ENCODE measurements at regions of chr20 and their contacts with region 1.

Region 1: DNA sequence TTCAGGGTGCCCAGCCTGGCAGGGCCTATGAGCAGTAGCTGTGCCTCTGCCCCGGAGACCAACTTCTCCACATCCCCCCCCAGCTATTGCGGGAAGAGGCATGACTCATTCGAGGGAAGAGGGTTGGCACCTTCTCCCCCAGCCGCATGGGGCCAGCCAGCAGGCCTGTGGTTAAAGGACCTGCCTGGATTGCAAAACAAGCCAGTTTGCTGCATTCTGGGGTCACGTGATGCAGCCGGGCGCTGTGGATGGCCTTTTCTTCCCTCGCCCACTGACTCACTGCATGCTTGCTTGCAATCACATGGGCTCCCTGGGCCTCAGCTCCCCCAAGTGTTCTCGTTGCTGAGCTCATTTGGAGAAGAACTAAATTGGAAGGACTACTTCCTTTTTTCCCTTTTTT is 182.5 kb downstream of the MAFB start:
- DNase-seq: peak; percentile 99
- H3K4me3 Mint-ChIP-seq: no peak overlapping the region
- H3K27ac Mint-ChIP-seq: peak overlapping the region; percentile 74
- H3K4me1 Mint-ChIP-seq: peaks cover 41% of the 10 kb centered on the region
- H3K27me3 Mint-ChIP-seq: no peaks in the 10 kb centered on the region
- CTCF ChIP-seq: no peak

Region 2: GRCh38 chr20:40279390-40279789 is 227.2 kb before region 1 on chr20:
- CTCF ChIA-PET with region 1: interaction called, 3 read pairs
- POLR2A ChIA-PET with region 1: interaction called, 11 read pairs
- intact Hi-C with region 1: no loop called
- DNase-seq: peak; percentile 84
- H3K4me3 Mint-ChIP-seq: no peak overlapping the region
- H3K27ac Mint-ChIP-seq: peak overlapping the region; percentile 84
- H3K4me1 Mint-ChIP-seq: peaks cover 28% of the 10 kb centered on the region
- H3K27me3 Mint-ChIP-seq: no peaks in the 10 kb centered on the region
- CTCF ChIP-seq: no peak

Region 3: GRCh38 chr20:40286975-40287531 is 219.5 kb before region 1 on chr20:
- CTCF ChIA-PET with region 1: interaction called, 11 read pairs
- POLR2A ChIA-PET with region 1: interaction called, 17 read pairs
- intact Hi-C with region 1: no loop called
- DNase-seq: peak; percentile 98
- H3K4me3 Mint-ChIP-seq: peak overlapping the region; percentile 40
- H3K27ac Mint-ChIP-seq: peak overlapping the region; percentile 92
- H3K4me1 Mint-ChIP-seq: peaks cover 36% of the 10 kb centered on the region
- H3K27me3 Mint-ChIP-seq: no peaks in the 10 kb centered on the region
- CTCF ChIP-seq: no peak

Region 4: DNA sequence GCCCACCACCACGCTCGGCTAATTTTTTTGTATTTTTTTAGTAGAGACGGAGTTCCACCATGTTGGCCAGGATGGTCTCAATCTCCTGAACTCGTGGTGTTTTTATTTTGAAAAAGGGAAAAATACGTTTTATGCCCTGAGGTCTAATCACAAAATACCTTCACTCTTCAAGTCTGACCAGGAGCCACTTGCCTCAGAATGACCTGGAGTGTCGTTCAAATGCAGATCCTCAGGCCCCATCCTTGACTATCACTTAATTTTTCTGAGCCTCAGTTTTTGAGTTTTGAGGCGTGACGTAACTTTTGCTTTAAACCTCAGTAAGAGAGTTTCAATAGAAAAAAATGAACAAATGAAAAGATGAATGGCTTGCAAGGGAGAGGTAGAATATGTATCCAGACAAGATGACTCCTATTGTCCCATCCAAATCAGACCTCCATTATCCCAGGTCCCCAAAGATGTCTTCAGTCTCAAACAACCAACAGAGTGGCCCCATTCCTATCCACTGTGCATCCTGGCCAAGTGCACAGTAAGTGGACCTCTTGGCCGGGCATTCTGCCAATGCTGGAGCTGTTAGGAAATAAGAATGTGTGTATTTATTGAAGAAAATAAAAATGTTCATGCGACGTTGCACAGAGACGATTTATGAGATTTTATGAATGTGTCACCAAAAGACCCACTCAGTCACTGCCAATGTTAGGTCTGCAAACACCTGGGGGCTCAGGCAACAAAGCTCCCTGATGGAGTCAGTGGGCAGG is 13.7 kb before region 1 on chr20:
- CTCF ChIA-PET with region 1: interaction called, 4 read pairs
- POLR2A ChIA-PET with region 1: interaction called, 18 read pairs
- intact Hi-C with region 1: no loop called
- DNase-seq: peak; percentile 93
- H3K4me3 Mint-ChIP-seq: peak overlapping the region; percentile 47
- H3K27ac Mint-ChIP-seq: peak overlapping the region; percentile 72
- H3K4me1 Mint-ChIP-seq: peaks cover 59% of the 10 kb centered on the region
- H3K27me3 Mint-ChIP-seq: no peaks in the 10 kb centered on the region
- CTCF ChIP-seq: no peak

Region 5: DNA sequence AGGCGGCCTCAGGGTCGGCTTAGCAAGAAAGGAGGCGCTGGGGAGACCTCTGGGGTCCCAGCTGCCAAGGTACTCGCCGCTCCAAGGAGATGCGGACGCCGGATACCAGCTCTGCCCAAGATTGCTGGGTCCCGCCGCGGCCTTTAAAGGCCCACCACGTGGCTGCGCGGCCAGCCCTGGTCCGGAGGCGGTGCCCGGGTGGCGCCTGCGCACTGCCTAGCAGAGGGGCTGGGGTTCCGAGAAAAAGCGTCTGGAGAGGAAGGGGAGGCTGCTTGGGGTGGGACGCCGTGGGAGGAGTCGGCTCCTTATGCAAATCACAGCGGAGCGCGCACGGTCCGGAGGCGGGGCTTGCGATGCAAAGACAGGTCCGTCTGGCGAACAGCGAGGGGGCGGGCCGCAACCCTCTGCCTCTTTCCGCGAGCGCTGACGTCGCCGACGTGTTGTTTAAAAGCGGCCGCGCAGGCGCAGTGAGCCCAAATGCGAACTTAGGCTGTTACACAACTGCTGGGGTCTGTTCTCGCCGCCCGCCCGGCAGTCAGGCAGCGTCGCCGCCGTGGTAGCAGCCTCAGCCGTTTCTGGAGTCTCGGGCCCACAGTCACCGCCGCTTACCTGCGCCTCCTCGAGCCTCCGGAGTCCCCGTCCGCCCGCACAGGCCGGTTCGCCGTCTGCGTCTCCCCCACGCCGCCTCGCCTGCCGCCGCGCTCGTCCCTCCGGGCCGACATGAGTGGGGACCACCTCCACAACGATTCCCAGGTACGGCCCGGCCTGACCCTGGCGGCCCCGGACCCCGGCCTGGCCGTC is 522.0 kb after region 1 on chr20 and contains the start of gene TOP1:
- CTCF ChIA-PET with region 1: no interaction called
- POLR2A ChIA-PET with region 1: no interaction called
- intact Hi-C with region 1: no loop called
- DNase-seq: peak; percentile 99
- H3K4me3 Mint-ChIP-seq: peak within 1 kb of the TSS; percentile 94
- H3K27ac Mint-ChIP-seq: peak within 1 kb of the TSS; percentile 100
- H3K4me1 Mint-ChIP-seq: peaks cover 41% of the 10 kb centered on the region
- H3K27me3 Mint-ChIP-seq: no peaks in the 10 kb centered on the region
- CTCF ChIP-seq: no peak
- total RNA-seq, gene TOP1: 141 and 174 TPM in 2 replicates